Transverse colon (tissue), 4 donors: ENCODE measurements at regions of chr10 and their contacts with region 1.

Region 1: GRCh38 chr10:84563868-84564267 is 235.5 kb downstream of the CCSER2 start:
- DNase-seq: no peak
- H3K4me3 ChIP-seq: no peak overlapping the region
- H3K27ac ChIP-seq: no peak overlapping the region
- H3K4me1 ChIP-seq: no peaks in the 10 kb centered on the region
- H3K27me3 ChIP-seq: peaks cover 4% of the 10 kb centered on the region
- CTCF ChIP-seq: no peak
- EP300 ChIP-seq: no peak
- POLR2A ChIP-seq: no peak

Region 2: DNA sequence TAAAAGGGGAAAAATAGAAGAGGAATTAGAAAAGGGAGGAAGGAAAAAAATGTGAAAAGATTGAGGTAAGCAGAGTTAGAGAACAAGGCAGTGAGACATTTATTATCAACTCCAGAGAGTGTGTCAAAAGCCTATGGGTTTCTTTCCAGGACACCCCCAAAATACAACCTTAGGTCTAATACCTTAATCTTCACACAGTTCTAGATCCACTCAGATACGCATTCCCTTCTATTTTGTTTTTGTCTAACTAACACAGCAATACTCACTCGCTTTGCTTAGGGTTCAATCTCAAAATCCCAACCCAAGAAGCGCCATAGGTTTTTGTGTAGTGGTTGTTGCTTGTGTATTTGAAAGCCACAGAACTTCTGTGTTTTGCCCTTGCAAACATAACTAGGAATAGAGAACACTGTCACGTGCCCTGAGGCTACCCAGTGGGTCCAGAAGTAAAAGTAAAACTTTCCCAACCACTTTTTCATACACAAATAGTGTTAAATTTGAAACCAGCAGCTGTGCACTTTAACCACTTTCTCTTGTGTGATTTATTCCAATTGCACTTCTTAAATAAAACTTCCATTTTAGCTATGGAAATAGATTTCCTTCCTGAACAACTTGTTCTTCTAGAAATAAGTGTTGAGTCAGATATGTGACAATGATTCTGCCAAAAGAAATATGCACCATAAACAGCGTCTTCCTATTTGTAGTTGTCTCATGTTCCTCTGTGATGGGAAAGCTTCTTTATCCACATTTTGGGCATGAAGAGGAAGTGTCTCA is 839.2 kb before region 1 on chr10:
- in situ Hi-C with region 1: no loop called
- intact Hi-C with region 1: no loop called
- DNase-seq: no peak
- H3K4me3 ChIP-seq: no peak overlapping the region
- H3K27ac ChIP-seq: no peak overlapping the region
- H3K4me1 ChIP-seq: no peaks in the 10 kb centered on the region
- H3K27me3 ChIP-seq: no peaks in the 10 kb centered on the region
- CTCF ChIP-seq: no peak
- EP300 ChIP-seq: no peak
- POLR2A ChIP-seq: no peak

Region 3: GRCh38 chr10:84547616-84548015 is 16.3 kb before region 1 on chr10:
- in situ Hi-C with region 1: no loop called
- intact Hi-C with region 1: loop called (anchors 2 kb)
- DNase-seq: no peak
- H3K4me3 ChIP-seq: no peak overlapping the region
- H3K27ac ChIP-seq: no peak overlapping the region
- H3K4me1 ChIP-seq: no peaks in the 10 kb centered on the region
- H3K27me3 ChIP-seq: no peaks in the 10 kb centered on the region
- CTCF ChIP-seq: no peak
- EP300 ChIP-seq: no peak
- POLR2A ChIP-seq: no peak